Activated CD4-positive, alpha-beta T cell treated with anti-CD3 and anti-CD28 coated beads, Interleukin-2, amount 10 ng/mL, durations not matched to agents 24 days and 14 days (primary cell): ENCODE measurements at regions of chr10 and their contacts with region 1.

Region 1: DNA sequence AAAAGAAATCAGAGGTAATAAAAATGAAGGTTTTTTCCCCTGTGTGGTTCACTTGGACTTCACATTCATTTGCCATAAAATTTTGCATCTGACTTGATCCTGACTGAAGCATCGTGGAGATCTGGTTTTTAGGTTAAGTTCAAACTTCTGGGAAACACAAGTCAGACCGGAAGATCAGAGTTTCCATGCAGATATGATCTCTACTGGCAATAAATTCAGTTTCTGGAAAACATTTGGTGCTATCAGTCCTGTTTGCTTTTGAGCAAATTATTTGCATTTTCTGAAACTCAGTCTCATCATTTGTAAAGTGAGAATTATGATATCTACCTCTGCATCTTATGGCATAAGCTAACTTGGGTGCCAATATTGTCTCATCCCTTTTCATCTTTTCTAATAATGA is 81.3 kb upstream of the KCNMA1 start:
- DNase-seq: no peak
- H3K4me3 Mint-ChIP-seq: no peak overlapping the region
- H3K27ac Mint-ChIP-seq: no peak overlapping the region
- H3K4me1 Mint-ChIP-seq: no peaks in the 10 kb centered on the region
- H3K27me3 Mint-ChIP-seq: peaks cover 12% of the 10 kb centered on the region

Region 2: DNA sequence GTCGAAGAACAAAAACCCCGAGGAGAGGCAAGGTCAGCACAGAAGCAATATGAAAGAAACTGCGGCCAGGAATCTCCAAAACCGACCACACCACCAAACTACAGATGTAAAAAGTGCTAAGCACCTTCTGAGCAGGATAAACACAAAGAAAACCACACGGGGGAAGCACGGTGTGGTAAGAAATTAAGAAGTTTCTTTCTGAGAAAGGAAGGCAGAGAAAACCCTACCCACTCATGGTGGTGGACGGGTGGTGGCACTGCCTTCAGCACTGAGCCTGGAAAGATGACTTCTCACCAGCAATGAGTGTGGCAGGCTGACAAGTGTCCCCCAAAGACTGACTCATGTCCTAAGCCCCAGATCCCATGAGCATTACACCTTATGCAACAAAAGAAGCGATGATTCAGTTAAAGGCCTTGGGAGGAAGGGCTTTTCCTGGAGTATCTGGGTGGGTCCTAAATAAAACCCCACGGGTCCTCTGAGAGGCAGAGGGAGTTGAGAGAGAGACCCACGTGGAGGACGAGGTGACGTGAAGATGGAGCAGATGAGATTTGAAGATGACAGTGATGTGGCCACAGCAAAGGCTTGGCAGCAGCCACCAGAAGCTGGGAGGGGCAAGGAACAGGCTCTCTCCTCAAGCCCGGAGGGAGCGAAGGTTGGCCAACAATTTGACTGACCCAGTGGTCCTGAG is 82.7 kb after region 1 on chr10:
- intact Hi-C with region 1: loop called (anchors 1 kb)
- DNase-seq: peak; percentile 86
- H3K4me3 Mint-ChIP-seq: peak overlapping the region; percentile 59
- H3K27ac Mint-ChIP-seq: peak overlapping the region; percentile 81
- H3K4me1 Mint-ChIP-seq: peaks cover 28% of the 10 kb centered on the region
- H3K27me3 Mint-ChIP-seq: no peaks in the 10 kb centered on the region

Region 3: DNA sequence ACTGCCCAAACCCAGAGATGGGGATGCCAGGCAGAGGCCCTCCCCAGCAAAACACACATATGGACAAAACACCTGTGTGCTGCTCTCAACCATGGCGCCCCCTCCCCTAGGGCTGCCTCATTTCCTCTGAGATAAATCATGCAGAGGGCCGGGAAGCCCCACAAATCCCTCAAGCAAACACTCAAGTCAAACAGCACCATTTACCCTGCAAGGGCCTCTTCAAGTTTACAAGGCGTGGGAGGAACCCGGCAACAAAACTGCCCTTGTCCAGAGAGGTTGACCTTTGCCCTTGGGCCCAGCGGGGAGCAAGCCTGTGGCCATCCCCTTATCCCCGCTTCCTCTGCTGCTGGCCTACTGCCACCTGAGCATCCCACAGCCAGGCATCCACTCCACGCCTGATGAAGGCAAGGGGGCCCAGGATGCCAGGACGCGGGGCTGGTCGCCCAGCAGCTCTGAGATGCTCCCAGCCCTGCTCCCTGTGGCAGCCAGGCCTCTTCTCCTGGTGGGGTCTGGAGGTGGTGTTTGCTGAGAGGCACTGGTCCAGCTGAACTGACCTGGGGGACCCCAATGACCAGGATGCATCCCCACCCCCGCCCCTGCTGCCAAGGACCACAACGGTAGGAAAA is 130.2 kb after region 1 on chr10:
- intact Hi-C with region 1: no loop called
- DNase-seq: no peak
- H3K4me3 Mint-ChIP-seq: no peak overlapping the region
- H3K27ac Mint-ChIP-seq: no peak overlapping the region
- H3K4me1 Mint-ChIP-seq: peaks cover 2% of the 10 kb centered on the region
- H3K27me3 Mint-ChIP-seq: no peaks in the 10 kb centered on the region

Region 4: DNA sequence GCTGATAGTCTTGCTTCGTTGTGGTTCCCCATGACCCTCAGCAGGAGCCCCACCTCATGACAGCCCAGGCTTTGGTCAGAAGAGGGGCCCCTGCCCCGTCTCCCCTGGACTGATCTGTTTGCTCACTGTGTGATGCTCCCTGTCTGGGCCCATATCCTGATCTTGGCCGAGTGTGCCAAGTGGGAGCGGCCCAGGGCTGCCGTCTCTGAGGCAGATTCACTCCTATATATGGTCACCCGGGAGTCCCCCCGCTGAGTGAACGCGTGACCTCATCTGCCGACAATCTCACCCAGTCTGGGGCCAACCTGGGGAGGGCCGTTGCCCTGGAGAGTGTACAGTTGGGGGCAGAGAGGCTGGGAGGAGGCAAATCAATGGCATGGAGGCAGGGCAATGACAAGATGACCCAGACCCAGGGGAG is 1662.9 kb after region 1 on chr10:
- intact Hi-C with region 1: no loop called
- DNase-seq: no peak
- H3K4me3 Mint-ChIP-seq: no peak overlapping the region
- H3K27ac Mint-ChIP-seq: no peak overlapping the region
- H3K4me1 Mint-ChIP-seq: no peaks in the 10 kb centered on the region
- H3K27me3 Mint-ChIP-seq: peaks cover 2% of the 10 kb centered on the region